ENCODE measurements at regions of chr18 and their contacts with region 1.

Region 1: GRCh38 chr18:75824661-75825060 is 397.2 kb upstream of the SMIM21 start:
- DNase-seq: no peak
- H3K4me3 ChIP-seq: no peak overlapping the region
- H3K4me3 Mint-ChIP-seq: no peak overlapping the region
- H3K27ac Mint-ChIP-seq: no peak overlapping the region
- H3K4me1 ChIP-seq: no peaks in the 10 kb centered on the region
- H3K4me1 Mint-ChIP-seq: peaks cover 5% of the 10 kb centered on the region
- H3K27me3 ChIP-seq: no peaks in the 10 kb centered on the region
- H3K27me3 Mint-ChIP-seq: no peaks in the 10 kb centered on the region
- CTCF ChIP-seq: no peak

Region 2: DNA sequence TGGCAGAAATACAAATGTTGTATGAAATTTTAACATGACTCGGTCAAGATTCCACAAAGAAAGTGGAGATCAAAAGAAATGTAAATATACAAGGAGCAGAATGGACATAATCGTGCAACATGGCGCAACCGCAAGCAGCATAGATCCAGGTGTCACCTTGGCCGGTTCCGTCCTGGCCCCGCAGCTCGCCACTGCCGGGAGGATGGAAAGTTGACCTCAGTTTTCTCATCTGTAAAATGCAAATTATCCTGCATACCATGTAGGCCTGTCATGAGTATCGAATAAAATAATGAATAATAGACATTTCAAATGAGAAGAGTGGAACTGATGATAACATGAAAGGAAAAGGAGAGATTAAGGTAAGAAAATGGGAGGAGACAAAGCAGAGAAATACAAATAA is 30.1 kb after region 1 on chr18:
- CTCF ChIA-PET with region 1: no interaction called
- POLR2A ChIA-PET with region 1: no interaction called
- intact Hi-C with region 1: no loop called
- DNase-seq: no peak
- H3K4me3 ChIP-seq: no peak overlapping the region
- H3K4me3 Mint-ChIP-seq: no peak overlapping the region
- H3K27ac Mint-ChIP-seq: no peak overlapping the region
- H3K4me1 ChIP-seq: no peaks in the 10 kb centered on the region
- H3K4me1 Mint-ChIP-seq: no peaks in the 10 kb centered on the region
- H3K27me3 ChIP-seq: no peaks in the 10 kb centered on the region
- H3K27me3 Mint-ChIP-seq: peaks cover 4% of the 10 kb centered on the region
- CTCF ChIP-seq: no peak

Region 3: DNA sequence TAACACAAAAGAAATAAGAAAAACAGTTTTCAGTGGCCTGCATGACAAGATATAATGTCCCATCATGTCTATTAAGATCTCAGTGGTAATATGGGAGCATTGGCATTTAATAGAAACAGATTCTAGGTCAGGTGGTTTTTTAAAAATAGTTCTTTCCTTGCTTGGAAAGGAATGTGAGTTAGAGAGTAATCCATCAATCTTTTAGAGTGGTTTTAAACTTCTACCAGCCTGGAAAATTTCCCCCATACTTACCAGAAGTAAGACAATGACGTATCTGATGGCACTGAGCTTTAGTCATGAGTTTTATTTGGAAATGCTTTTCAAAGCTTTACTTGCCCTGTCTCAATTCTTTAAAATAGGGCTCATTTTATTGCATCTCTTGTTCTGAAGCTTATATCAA is 44.5 kb after region 1 on chr18:
- CTCF ChIA-PET with region 1: no interaction called
- POLR2A ChIA-PET with region 1: no interaction called
- intact Hi-C with region 1: no loop called
- DNase-seq: no peak
- H3K4me3 ChIP-seq: no peak overlapping the region
- H3K4me3 Mint-ChIP-seq: no peak overlapping the region
- H3K27ac Mint-ChIP-seq: no peak overlapping the region
- H3K4me1 ChIP-seq: no peaks in the 10 kb centered on the region
- H3K4me1 Mint-ChIP-seq: no peaks in the 10 kb centered on the region
- H3K27me3 ChIP-seq: no peaks in the 10 kb centered on the region
- H3K27me3 Mint-ChIP-seq: peaks cover 9% of the 10 kb centered on the region
- CTCF ChIP-seq: no peak

Region 4: DNA sequence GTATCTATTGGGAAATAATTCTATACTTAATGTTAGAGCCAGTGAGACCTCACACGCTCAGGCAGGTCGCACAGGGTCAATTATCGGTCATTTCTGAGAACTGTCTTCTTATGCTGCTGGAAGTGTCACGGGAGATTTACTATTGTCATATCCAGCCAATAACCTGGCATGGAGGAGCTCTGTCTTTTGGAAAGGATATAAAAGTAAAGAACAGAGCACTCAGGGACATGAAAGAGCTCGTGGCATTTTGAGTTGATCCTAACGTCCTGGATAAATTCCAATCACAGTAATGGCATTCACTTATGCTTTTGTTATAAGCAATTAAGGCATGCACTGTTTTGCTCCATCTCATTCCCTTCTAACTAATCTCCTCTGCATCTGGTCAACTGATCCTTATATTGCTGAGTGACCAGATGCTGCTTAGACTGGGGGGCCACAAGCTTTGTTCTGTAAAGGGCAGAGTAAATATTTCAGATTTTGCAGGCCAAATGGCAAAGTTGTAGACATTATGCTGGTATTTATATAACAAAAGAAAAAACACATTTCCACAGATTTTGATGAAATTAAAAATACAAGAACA is 56.4 kb after region 1 on chr18:
- CTCF ChIA-PET with region 1: no interaction called
- POLR2A ChIA-PET with region 1: no interaction called
- intact Hi-C with region 1: no loop called
- DNase-seq: no peak
- H3K4me3 ChIP-seq: no peak overlapping the region
- H3K4me3 Mint-ChIP-seq: no peak overlapping the region
- H3K27ac Mint-ChIP-seq: no peak overlapping the region
- H3K4me1 ChIP-seq: no peaks in the 10 kb centered on the region
- H3K4me1 Mint-ChIP-seq: no peaks in the 10 kb centered on the region
- H3K27me3 ChIP-seq: no peaks in the 10 kb centered on the region
- H3K27me3 Mint-ChIP-seq: no peaks in the 10 kb centered on the region
- CTCF ChIP-seq: no peak

Region 5: GRCh38 chr18:75896865-75897264 is 72.2 kb after region 1 on chr18:
- CTCF ChIA-PET with region 1: no interaction called
- POLR2A ChIA-PET with region 1: no interaction called
- intact Hi-C with region 1: loop called (anchors 2 kb)
- DNase-seq: peak in 1 of 2 experiments; percentile 5
- H3K4me3 ChIP-seq: no peak overlapping the region
- H3K4me3 Mint-ChIP-seq: no peak overlapping the region
- H3K27ac Mint-ChIP-seq: no peak overlapping the region
- H3K4me1 ChIP-seq: no peaks in the 10 kb centered on the region
- H3K4me1 Mint-ChIP-seq: no peaks in the 10 kb centered on the region
- H3K27me3 ChIP-seq: no peaks in the 10 kb centered on the region
- H3K27me3 Mint-ChIP-seq: no peaks in the 10 kb centered on the region
- CTCF ChIP-seq: peak in 1 of 2 experiments; percentile 4

Region 6: GRCh38 chr18:75923169-75923568 is 98.5 kb after region 1 on chr18:
- CTCF ChIA-PET with region 1: no interaction called
- POLR2A ChIA-PET with region 1: no interaction called
- intact Hi-C with region 1: no loop called
- DNase-seq: no peak
- H3K4me3 ChIP-seq: no peak overlapping the region
- H3K4me3 Mint-ChIP-seq: no peak overlapping the region
- H3K27ac Mint-ChIP-seq: no peak overlapping the region
- H3K4me1 ChIP-seq: no peaks in the 10 kb centered on the region
- H3K4me1 Mint-ChIP-seq: no peaks in the 10 kb centered on the region
- H3K27me3 ChIP-seq: no peaks in the 10 kb centered on the region
- H3K27me3 Mint-ChIP-seq: peaks cover 11% of the 10 kb centered on the region
- CTCF ChIP-seq: no peak

Measured in Caco-2 (cell line).